ENCODE measurements at regions of chr15 and their contacts with region 1.

Region 1: GRCh38 chr15:89057504-89058133 is 30.6 kb upstream of the ABHD2 start:
- DNase-seq: peak; percentile 84
- ATAC-seq: peak; percentile 88
- H3K4me3 ChIP-seq: no peak overlapping the region
- H3K27ac ChIP-seq: no peak overlapping the region
- H3K4me1 ChIP-seq: no peaks in the 10 kb centered on the region
- H3K27me3 ChIP-seq: no peaks in the 10 kb centered on the region
- CTCF ChIP-seq: peak; percentile 98

Region 2: DNA sequence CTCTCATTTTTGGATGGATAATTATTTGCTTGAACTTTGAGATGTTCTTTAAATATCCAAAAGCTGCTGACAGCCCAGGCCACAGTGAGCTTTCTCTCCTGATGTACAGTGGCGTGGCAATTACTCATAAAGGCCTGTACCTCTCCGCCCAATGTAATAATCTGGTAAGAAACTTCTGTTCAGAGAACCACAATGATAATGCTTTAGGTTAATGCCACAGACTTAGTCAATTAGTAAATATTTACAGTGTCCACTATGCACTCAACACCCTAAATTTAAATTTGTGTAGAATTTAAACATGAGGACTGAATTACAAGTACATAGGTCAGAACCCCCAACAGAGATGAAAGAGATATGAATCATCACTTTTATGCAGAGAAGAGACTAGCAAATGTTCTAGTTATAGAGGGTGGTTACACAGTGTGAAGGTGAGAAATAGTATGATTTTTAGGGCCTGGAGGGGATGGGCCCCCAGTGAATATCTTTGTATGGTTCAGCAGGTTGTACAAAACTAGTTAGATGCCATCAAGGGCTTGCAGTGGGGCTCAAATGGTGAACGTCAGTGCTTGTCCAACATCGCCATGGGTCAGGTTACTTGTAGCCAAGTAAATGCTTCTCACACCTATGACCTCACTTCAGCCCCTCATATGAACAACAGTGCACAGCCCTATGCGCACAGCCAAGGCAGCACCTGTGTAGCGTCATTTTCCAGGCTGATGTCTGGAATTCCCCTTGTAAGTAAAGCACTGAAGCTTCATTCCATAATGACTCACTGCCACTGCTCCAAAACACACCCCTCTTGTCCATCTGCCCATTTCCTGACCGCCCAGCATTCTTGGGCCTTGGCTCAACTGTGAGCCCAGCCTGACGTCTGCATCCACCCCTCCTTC is 43.9 kb after region 1 on chr15:
- CTCF ChIA-PET with region 1: interaction called, 7 read pairs
- POLR2A ChIA-PET with region 1: no interaction called
- intact Hi-C with region 1: loop called (anchors 1 kb)
- DNase-seq: peak; percentile 95
- ATAC-seq: peak; percentile 79
- H3K4me3 ChIP-seq: peak overlapping the region; percentile 49
- H3K27ac ChIP-seq: peak overlapping the region; percentile 98
- H3K4me1 ChIP-seq: peaks cover 85% of the 10 kb centered on the region
- H3K27me3 ChIP-seq: no peaks in the 10 kb centered on the region
- CTCF ChIP-seq: no peak

Region 3: DNA sequence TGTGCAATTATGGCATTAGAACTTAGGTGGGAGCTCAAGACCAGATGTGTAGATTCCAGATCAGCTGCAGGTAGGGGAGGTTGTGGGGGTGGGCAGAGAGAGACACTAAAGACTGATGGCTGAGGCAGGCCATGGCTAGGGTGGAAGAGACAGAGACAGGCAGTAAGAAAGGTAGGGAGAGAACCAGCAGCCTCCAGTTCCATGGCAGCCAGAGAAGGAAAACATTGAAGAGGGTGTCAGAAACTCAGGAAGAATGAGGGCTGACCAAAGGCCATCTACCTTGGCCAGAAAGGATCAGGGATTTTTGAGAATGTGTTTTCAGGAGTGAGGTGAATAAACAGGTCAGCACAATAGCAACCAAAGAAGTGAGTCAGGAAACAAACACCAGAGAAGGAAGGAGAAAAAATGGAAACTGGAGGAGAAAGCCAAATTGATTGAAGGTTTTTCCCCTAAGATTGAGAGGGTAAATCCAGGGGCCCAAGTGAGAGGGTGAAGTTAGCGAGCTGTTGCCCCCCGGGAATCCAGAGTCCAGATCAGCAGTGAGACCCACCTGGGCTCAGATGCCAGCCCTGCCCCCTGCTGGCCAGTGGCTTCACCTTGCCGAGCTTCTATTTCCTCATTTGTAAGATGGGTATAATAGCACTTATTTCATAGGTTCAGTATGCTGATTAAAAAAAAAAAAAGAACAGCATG is 71.7 kb after region 1 on chr15:
- CTCF ChIA-PET with region 1: no interaction called
- POLR2A ChIA-PET with region 1: no interaction called
- intact Hi-C with region 1: loop called (anchors 2 kb)
- DNase-seq: peak; percentile 40
- ATAC-seq: peak; percentile 22; the same call in 1 of the 2 replicates
- H3K4me3 ChIP-seq: no peak overlapping the region
- H3K27ac ChIP-seq: peak overlapping the region; percentile 35
- H3K4me1 ChIP-seq: peaks cover 41% of the 10 kb centered on the region
- H3K27me3 ChIP-seq: no peaks in the 10 kb centered on the region
- CTCF ChIP-seq: peak; percentile 92

Region 4: GRCh38 chr15:89171136-89172072 is 113.8 kb after region 1 on chr15:
- CTCF ChIA-PET with region 1: interaction called, 3 read pairs
- POLR2A ChIA-PET with region 1: no interaction called
- intact Hi-C with region 1: loop called (anchors 1 kb)
- DNase-seq: peak; percentile 77
- ATAC-seq: no peak
- H3K4me3 ChIP-seq: no peak overlapping the region
- H3K27ac ChIP-seq: no peak overlapping the region
- H3K4me1 ChIP-seq: peaks cover 29% of the 10 kb centered on the region
- H3K27me3 ChIP-seq: no peaks in the 10 kb centered on the region
- CTCF ChIP-seq: peak; percentile 90

Region 5: DNA sequence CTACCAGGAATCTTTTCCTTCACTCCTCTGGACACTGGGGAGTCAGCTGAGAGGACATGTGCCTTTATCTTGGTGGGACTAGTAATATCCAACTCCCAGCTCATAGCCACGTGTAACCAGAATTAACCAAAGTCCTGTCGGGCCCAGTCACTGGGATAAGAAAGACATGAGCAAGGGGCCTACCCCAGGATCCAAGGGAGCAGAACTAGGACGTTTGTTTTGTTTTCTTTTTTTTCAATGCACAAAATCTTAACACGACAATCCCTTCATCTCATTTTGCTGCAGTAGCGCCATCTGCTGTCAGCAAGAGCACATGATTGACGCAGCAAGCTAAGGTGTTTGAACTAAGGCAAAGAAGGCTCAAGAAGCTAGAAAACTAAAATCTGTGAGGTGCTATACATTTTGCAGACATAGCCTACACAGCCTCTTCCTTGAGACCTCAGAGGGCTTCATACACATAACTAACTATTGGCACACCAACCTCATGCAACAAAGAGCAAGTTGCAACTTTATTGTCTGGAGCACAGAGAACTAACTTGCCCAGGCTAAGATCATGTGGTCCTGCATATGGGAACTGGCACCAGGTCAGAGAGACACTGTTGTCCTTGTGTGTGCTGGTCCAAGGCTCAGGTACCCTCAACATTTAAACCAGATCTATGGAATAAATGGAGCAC is 120.2 kb after region 1 on chr15:
- CTCF ChIA-PET with region 1: interaction called, 5 read pairs
- POLR2A ChIA-PET with region 1: no interaction called
- intact Hi-C with region 1: loop called (anchors 1 kb)
- DNase-seq: peak; percentile 81
- ATAC-seq: peak; percentile 65
- H3K4me3 ChIP-seq: no peak overlapping the region
- H3K27ac ChIP-seq: no peak overlapping the region
- H3K4me1 ChIP-seq: no peaks in the 10 kb centered on the region
- H3K27me3 ChIP-seq: no peaks in the 10 kb centered on the region
- CTCF ChIP-seq: peak; percentile 90